ENCODE measurements at regions of chr9 and their contacts with region 1.

Region 1: DNA sequence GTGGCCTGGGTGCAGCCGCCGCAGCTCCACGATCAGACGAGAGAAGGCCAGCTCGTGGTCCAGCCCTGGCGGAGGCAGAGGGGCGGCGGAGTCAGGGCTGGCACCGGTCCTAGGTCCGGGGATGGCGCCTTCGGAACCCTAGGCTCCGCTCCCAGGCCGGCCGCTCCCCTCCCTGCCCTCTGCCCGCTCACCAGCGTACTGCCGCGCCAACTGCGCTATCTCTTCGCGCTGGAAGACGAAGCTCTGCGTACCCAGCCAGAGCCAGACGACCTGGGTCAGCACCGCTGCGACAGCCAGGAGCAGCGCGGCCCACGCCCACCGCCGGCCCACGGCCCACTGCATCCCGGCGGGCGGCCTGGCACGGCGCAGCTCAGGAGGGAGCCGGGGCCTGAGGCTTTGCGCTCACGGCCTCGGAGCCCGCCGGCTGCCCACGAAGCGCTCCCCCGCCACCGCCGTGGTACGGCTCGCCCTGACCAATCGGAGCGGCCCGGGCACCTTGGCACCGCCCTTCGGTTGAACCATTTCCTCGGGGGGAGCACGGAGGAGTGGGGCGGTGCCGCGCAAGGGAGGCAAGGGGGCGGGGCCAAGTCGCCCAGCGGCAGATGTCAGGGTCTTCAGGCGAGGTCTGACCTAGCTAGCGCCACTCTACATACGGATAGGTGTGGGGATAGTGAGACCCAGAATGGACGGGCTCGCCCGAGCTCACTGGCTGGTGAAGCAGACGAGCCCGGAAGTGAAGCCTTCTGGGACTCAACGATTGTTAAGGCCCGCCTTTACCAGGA is at the start of gene SIGMAR1:
- DNase-seq: peak; percentile 63 to 96
- H3K4me3 ChIP-seq: peak within 1 kb of the TSS; percentile 71 to 78 (median 77)
- H3K27ac ChIP-seq: no peak within 1 kb of the TSS; the same call in 1 of the 2 replicates
- H3K4me1 ChIP-seq: peaks cover 2 to 11% (median 8%) of the 10 kb centered on the region in 4 experiments; a peak in 4 of 7 replicates
- H3K27me3 ChIP-seq: peaks cover 0 to 6% (median 3%) of the 10 kb centered on the region in 4 experiments; a peak in 2 of 7 replicates
- CTCF ChIP-seq: no peak
- EP300 ChIP-seq: peak in 1 of 2 experiments; percentile 98; a peak in 2 of 3 replicates
- POLR2A ChIP-seq: peak; percentile 49 to 61; a peak in 2 of 3 replicates
- RAD21 ChIP-seq: no peak
- total RNA-seq, gene SIGMAR1: 84.2 and 86.8 TPM in 2 replicates

Region 2: DNA sequence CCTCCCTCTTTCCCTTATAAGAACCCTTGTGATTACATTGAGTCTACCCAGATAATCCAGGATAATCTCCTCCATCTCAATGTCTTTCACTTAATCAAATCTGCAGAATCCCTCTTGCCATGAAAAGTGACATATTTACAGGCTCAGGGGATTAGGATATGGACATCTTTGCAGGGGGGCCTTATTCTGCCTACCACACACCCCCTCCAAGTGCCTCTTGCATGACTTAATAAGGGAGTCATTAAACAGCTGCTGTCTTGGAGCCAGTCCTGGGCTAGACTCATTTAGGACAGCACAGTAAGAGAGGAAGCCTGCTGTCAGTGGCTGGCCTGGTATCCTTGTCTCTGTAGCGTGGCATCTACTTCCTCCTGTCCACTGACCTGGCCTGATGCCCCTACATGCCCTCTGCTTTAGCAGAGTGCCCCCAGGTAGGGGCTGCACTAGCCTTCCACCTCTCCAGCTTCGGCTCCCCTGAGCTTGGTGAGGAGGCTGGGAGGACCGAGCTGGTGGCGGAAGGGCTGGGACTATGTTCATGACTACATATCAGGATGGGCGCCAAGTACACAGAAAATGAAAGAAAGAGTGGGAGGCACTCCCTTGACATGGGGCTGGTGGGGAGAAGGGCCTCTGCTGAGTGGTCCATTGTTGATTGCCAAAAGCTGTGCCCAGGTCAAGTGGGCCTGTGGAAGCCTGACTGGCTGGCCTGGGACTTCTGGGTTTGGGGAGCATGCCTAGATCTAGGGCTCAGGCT is 132.0 kb before region 1 on chr9:
- CTCF ChIA-PET with region 1: no interaction called
- POLR2A ChIA-PET with region 1: no interaction called
- DNase-seq: no peak
- H3K4me3 ChIP-seq: no peak overlapping the region
- H3K27ac ChIP-seq: no peak overlapping the region
- H3K4me1 ChIP-seq: peaks cover 0 to 7% (median 3%) of the 10 kb centered on the region in 4 experiments; a peak in 2 of 7 replicates
- H3K27me3 ChIP-seq: no peaks in the 10 kb centered on the region
- CTCF ChIP-seq: no peak
- EP300 ChIP-seq: no peak
- POLR2A ChIP-seq: no peak
- RAD21 ChIP-seq: no peak

Region 3: GRCh38 chr9:34578241-34579103 is 59.1 kb before region 1 on chr9:
- CTCF ChIA-PET with region 1: interaction called, 6 read pairs
- POLR2A ChIA-PET with region 1: interaction called, 12 read pairs
- DNase-seq: peak in 1 of 2 experiments; percentile 74
- H3K4me3 ChIP-seq: peak overlapping the region; percentile 24 to 55 (median 44)
- H3K27ac ChIP-seq: no peak overlapping the region
- H3K4me1 ChIP-seq: peaks cover 12 to 45% (median 30%) of the 10 kb centered on the region in 4 experiments
- H3K27me3 ChIP-seq: peaks cover 21 to 81% (median 65%) of the 10 kb centered on the region in 4 experiments
- CTCF ChIP-seq: peak in 1 of 3 experiments; percentile 6; a peak in 1 of 4 replicates
- EP300 ChIP-seq: no peak
- POLR2A ChIP-seq: no peak
- RAD21 ChIP-seq: no peak

Region 4: GRCh38 chr9:34611829-34612630 is 25.5 kb before region 1 on chr9 and contains the start of gene RPP25L:
- CTCF ChIA-PET with region 1: interaction called, 401 read pairs
- POLR2A ChIA-PET with region 1: interaction called, 17 read pairs
- DNase-seq: peak in 1 of 2 experiments; percentile 88
- H3K4me3 ChIP-seq: peak within 1 kb of the TSS; percentile 74 to 87 (median 82)
- H3K27ac ChIP-seq: peak within 1 kb of the TSS; percentile 43; the same call in 1 of the 2 replicates
- H3K4me1 ChIP-seq: peaks cover 0 to 11% (median 6%) of the 10 kb centered on the region in 4 experiments; a peak in 6 of 7 replicates
- H3K27me3 ChIP-seq: peaks cover 0 to 6% (median 2%) of the 10 kb centered on the region in 4 experiments; a peak in 2 of 7 replicates
- CTCF ChIP-seq: peak in 1 of 3 experiments; percentile 3; a peak in 1 of 4 replicates
- EP300 ChIP-seq: no peak
- POLR2A ChIP-seq: peak in 1 of 2 experiments; percentile 44; a peak in 1 of 3 replicates
- RAD21 ChIP-seq: no peak
- total RNA-seq, gene RPP25L: 21.6 and 25.6 TPM in 2 replicates

Region 5: DNA sequence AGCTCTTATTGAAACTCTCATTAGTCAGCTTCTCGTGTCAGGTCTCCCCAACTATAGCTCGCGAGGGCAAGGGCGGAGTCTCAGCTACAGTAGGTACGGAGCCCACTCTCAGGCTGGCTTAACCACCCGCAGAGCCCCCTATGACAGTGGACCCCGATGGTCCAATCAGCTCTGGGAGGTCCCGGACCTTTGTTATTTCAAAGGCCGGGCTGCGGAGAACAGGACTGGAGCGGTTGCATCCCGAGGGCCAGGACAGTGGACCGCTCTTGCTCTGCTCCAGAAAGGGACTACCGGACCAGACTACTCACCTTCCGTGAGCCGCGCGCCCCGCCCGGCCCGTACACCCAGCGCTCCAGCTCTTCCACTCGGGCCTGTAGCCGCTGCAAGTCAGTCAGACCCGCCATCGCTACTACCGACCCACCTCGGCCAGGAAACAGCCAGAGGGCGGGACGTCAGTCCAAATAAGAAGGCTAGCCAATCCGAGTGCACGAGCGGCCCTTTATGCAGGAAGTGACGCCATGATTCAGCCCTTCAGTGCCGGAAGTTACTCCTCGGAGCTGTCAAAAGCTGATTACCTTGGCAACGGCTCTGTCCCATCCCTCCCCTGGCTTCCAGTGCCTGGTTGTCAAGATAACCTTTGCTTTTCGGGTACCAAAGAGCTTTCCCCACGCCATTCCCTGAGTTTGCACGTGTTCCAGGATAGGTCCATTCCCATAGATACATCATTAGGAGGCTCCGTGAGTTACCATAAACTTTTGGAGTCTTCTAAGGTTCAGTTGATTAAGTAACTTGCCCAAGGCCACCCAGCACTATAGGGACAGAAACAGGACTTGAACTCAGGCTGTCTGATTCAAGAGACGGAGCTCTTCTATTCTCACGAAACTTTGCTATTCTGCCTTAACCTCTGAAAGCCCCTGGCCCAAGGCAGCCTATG is 17.2 kb before region 1 on chr9 and contains the start of gene DCTN3:
- CTCF ChIA-PET with region 1: interaction called, 401 read pairs
- POLR2A ChIA-PET with region 1: interaction called, 12 read pairs
- DNase-seq: peak in 1 of 2 experiments; percentile 83
- H3K4me3 ChIP-seq: peak within 1 kb of the TSS; percentile 55 to 79 (median 72)
- H3K27ac ChIP-seq: no peak within 1 kb of the TSS
- H3K4me1 ChIP-seq: peaks cover 0 to 5% (median 4%) of the 10 kb centered on the region in 4 experiments; a peak in 5 of 7 replicates
- H3K27me3 ChIP-seq: peaks cover 17 to 37% (median 35%) of the 10 kb centered on the region in 4 experiments
- CTCF ChIP-seq: peak in 1 of 3 experiments; percentile 6; a peak in 1 of 4 replicates
- EP300 ChIP-seq: no peak
- POLR2A ChIP-seq: no peak
- RAD21 ChIP-seq: no peak
- total RNA-seq, gene DCTN3: 23.4 and 25.6 TPM in 2 replicates

Region 6: DNA sequence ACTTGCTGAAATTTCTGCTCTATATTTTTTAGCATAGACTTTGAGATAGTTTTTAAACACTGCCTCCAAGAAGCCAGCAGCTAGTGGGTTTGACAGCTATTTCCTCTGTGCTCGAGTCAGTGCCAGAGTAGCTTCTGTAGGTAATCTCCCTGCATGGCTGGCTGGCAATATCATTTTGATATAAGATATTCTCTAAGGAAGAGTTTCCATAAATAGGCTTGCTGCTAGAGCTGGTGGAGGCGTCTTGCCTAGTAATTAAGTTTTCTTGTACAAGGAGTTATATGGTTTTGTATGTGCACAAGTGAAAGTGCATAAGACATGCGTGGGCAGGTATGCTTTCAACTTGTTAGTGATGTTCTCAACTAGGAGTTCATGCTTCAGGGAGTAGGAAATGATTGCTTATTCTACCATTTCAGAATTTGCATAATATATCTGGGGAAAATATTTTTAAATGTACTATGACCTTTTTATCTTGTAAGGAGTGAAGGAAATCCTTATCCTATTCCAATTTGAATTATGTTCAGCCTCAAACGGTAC is 146.5 kb after region 1 on chr9:
- CTCF ChIA-PET with region 1: no interaction called
- POLR2A ChIA-PET with region 1: no interaction called
- DNase-seq: no peak
- H3K4me3 ChIP-seq: no peak overlapping the region
- H3K27ac ChIP-seq: no peak overlapping the region
- H3K4me1 ChIP-seq: no peaks in the 10 kb centered on the region
- H3K27me3 ChIP-seq: no peaks in the 10 kb centered on the region; a peak in 1 of 7 replicates
- CTCF ChIP-seq: no peak
- EP300 ChIP-seq: no peak
- POLR2A ChIP-seq: no peak
- RAD21 ChIP-seq: no peak

Measured in H1 (cell line).